ENCODE measurements at regions of chr3 and their contacts with region 1.

Region 1: GRCh38 chr3:41243183-41243582 is 43.9 kb downstream of the CTNNB1 start:
- DNase-seq: no peak
- ATAC-seq: no peak
- H3K4me3 ChIP-seq: no peak overlapping the region
- H3K27ac ChIP-seq: no peak overlapping the region
- H3K4me1 ChIP-seq: no peaks in the 10 kb centered on the region
- H3K27me3 ChIP-seq: no peaks in the 10 kb centered on the region
- CTCF ChIP-seq: no peak

Region 2: DNA sequence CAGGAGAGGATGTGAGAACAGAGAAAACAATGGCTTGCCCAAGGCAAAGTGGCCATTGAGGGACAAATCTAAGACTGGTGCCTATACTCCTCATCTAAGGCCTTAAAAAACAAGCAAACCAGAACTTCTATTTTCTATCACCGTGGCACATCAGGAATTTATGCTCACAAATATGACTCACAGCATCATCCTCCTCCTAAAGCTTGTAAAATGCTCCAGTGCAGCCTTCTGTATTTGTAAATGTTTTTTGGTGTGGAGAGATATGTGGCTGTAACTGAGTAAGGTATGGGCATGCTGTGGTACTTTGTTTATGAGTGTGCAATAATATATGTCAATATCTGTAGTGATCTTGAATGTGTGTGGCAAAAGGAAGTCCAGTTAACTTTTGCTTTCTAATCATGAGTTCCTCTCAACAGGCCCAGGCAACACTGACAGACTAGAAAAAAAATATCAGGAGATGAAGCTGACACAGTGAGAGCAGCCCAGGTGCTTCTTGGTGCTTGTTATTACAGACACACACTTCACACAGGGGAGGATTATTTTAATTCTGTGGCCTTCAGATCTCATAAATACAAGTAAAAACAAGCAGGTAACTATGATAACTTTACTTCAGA is 16.4 kb after region 1 on chr3:
- CTCF ChIA-PET with region 1: no interaction called
- POLR2A ChIA-PET with region 1: no interaction called
- intact Hi-C with region 1: loop called (anchors 2 kb)
- DNase-seq: peak; percentile 87
- ATAC-seq: peak; percentile 99
- H3K4me3 ChIP-seq: no peak overlapping the region
- H3K27ac ChIP-seq: peak overlapping the region; percentile 9; the same call in 1 of the 2 replicates
- H3K4me1 ChIP-seq: peaks cover 15% of the 10 kb centered on the region
- H3K27me3 ChIP-seq: no peaks in the 10 kb centered on the region
- CTCF ChIP-seq: no peak

Measured in PC-3 (cell line).